Posterior cingulate gyrus (tissue), 11 donors: ENCODE measurements at regions of chr1 and their contacts with region 1.

Region 1: DNA sequence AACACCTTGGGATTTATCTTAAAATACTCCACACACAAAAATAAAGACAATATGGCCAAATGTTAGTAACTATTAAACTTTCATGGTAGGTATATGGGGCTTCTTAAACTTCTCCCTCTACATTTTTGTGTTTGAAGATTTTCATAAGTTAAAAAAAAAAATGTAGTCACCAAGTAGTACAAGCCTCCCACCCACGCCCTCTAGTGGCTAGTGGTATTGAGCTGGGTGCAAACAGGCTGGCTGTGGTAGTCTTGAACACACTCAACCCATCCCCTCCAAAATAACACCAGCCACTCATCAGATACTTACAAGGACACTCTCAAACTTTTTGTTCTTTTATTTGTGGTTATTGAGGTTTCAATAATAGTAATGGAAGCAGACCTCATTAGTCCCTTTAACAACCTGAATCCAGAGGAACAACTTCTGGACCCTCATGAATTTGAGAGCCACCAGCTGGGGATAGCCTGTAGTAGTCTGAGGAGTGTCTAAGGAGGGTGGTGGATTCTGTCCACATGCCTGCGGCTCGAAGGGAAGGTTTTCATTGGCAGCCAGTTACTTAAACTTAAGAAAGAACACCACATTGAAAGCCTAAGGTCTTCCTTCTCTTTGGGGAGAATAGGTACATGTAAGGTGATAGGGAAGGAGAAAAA is 15.6 kb downstream of the RD3 start:
- DNase-seq: peak in 7 of 10 donors; percentile 55 to 92 (median 62)

Region 2: DNA sequence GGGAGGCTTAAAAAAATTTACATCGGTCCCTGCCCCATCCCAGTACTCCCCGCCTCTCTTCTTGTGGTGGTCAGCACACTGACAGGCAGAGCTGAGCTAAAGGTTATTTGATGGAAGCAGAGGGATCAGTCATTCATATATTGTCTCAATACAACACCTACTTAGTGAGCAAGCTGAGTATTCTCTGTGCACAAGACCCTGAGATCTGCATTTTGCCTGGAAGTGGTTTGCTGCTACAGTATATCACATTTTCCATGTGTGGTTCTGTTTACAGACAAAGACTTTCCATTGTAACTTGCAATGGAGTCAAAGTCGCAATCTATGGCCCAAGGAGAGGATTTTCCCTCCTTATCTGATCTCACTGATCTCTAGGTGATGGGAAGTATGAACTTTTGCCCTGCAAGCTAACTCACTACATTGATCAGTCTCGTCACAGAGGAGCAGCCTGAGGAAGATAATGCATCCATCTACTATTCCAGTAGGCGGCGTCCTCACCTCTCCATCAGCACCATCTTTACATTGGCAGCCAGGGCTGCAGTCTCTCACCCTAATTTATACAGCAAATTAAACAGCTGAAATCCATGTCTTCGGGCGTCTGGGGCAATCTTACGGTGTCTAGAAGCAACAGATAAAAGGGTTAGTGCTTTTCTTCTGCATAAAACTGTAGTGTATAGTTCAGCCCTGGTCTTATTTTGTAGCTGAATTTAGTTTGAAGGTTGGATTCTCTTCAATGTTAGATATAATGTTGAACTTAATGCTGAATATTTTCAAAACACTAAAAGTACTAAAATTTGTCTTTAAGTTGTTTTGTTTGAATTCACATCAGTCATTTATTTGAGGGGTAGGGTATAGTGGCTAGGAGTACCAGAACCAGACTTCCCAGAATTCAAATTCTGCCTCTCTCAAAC is 152.9 kb before region 1 on chr1:
- intact Hi-C with region 1: loop called (anchors 10 kb)
- DNase-seq: peak in 4 of 10 donors; percentile 25 to 53 (median 43)